ENCODE measurements at regions of chr3 and their contacts with region 1.

Region 1: GRCh38 chr3:184185461-184186308 is at the start of gene ABCF3:
- DNase-seq: peak; percentile 100
- ATAC-seq: peak; percentile 98
- total RNA-seq, gene ABCF3: 69.3 TPM

Region 2: GRCh38 chr3:184031187-184031792 is 154.4 kb before region 1 on chr3 and contains the start of gene HTR3D:
- intact Hi-C with region 1: no loop called
- DNase-seq: no peak
- ATAC-seq: no peak
- total RNA-seq, gene HTR3D: not detected

Region 3: GRCh38 chr3:184058029-184058428 is 127.7 kb before region 1 on chr3:
- intact Hi-C with region 1: no loop called
- DNase-seq: no peak
- ATAC-seq: no peak

Region 4: DNA sequence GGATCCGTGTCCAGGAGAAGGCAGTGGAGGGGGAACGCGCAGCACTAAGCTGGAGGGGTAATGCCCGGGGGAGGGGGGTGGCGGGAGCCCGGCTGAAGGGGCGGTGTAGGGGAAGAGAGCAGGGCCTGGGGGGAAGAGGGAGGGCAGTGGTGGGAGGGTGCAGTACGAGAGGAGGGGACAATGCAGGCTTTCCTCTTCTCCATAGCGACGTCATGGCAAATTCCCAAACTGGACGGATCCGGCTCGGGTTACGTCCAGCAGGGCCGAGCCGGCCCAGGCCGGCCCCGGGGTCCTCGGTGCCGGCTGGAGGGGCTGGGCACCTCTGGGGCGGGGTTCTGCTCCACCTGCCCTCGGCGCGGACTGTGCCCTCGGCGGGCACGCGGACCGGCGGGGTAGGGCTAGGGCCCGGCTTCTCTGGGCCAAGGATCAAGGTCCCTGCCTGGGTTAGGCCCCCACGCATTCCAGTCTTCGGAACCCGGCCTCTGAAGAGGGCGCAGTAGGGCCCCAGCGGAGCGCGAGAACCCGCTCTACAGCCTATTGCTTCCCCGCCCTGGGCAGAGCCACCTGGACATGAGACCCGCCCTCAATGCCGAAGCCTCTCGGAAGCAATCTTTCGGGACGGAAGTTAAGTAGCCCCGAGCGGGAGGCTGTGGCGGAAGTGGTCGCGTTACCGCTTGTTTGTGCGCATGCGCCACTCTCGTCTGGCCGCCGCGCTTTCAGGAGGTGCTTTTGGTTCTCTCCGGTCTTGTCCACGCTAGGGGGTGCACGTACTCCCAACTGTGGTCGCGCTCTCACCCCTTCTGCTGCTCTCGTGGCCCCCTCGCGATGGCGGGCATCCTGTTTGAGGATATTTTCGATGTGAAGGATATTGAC is 177.2 kb after region 1 on chr3:
- intact Hi-C with region 1: loop called (anchors 5 kb)
- DNase-seq: peak; percentile 97
- ATAC-seq: peak; percentile 86